Left lung (tissue), 14 donors: ENCODE measurements at regions of chr4 and their contacts with region 1.

Region 1: GRCh38 chr4:165131247-165131832 is 18.7 kb upstream of the TMEM192 start:
- DNase-seq: peak in 2 of 4 donors; percentile 51 to 60
- ATAC-seq: peak; percentile 95
- H3K4me3 ChIP-seq: no peak overlapping the region
- H3K27ac ChIP-seq: no peak overlapping the region
- H3K4me1 ChIP-seq: peaks cover 0 to 17% of the 10 kb centered on the region in 2 donors
- H3K27me3 ChIP-seq: no peaks in the 10 kb centered on the region
- CTCF ChIP-seq: peak; percentile 86 to 91

Region 2: DNA sequence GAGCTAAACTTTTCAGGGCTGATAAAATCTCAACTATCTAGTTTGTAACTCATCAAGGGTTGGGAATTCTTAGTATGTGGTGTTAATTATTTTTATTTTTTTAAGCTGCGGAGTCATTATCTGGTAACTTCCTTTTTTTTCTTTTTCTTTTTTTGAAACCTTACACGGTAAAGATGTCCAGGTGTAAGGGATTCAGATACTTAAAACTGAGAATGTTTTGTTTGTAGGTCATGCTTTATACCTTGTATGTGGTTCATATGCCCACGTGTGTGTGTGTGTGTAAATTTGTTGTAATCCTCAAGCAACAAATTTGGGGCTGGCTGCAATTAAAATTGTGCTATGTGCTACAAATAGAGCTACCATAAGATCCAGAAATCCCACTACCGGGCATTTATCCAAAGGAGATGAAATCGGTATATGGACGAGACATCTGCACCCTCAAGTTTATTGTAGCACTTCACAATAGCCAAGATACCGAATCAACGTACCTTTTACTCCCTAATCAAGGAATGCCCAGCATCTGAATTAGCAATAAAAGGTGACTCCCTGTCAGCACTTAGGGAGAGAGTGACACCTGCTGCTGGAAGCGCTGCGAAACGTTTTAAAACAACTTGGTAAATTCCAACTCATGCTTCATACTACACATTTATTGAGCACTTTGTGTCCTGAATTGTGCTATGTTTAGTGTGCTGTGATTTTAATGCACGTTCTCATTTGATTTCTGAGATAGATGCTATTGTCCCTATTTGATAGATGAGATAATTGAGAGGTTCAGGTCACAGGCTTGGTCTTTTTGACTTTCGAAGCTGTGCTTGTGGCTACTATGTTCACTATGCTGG is 212.2 kb after region 1 on chr4:
- intact Hi-C with region 1: loop called in 1 of 2 experiments (anchors 5 kb)
- DNase-seq: no peak
- ATAC-seq: peak; percentile 53
- H3K4me3 ChIP-seq: no peak overlapping the region
- H3K27ac ChIP-seq: no peak overlapping the region
- H3K4me1 ChIP-seq: no peaks in the 10 kb centered on the region
- H3K27me3 ChIP-seq: no peaks in the 10 kb centered on the region
- CTCF ChIP-seq: no peak

Region 3: DNA sequence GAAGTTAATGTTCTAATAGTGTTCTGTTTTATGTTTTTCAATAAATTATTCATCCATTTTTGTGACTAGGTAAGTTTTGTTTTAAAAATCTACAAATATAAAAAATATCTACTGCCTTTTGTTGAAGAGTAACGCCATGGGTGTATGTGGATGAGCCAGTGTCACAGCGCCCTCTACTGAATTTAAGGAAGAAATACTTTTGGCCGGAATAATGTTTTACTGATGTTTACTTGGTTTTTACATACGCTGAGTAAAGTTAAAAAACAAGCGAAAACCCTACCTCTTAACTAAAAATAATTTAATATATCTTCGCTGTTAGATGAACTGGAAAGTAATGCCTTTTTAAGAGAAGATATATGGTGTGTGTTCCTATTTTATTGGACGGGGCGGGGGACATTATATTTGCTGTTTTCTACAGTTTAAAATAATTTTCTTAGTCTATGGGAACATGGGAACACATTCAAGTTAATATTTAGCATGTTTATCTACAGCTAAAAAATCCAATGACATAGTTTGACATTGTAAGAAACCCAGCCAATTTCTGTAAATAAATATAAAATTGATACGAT is 333.6 kb after region 1 on chr4:
- intact Hi-C with region 1: loop called in 1 of 2 experiments (anchors 5 kb)
- DNase-seq: peak in 2 of 4 donors; percentile 51 to 71
- ATAC-seq: peak; percentile 88
- H3K4me3 ChIP-seq: no peak overlapping the region
- H3K27ac ChIP-seq: no peak overlapping the region
- H3K4me1 ChIP-seq: no peaks in the 10 kb centered on the region
- H3K27me3 ChIP-seq: no peaks in the 10 kb centered on the region
- CTCF ChIP-seq: peak; percentile 57 to 80